Activated CD4-positive, alpha-beta T cell treated with anti-CD3 and anti-CD28 coated beads, Interleukin-2, amount 10 ng/mL, durations not matched to agents 24 days and 14 days (primary cell): ENCODE measurements at regions of chr14 and their contacts with region 1.

Region 1: GRCh38 chr14:20682435-20683124 is 1.8 kb upstream of the RNASE4 start:
- DNase-seq: peak; percentile 92
- H3K4me3 Mint-ChIP-seq: no peak overlapping the region
- H3K27ac Mint-ChIP-seq: no peak overlapping the region
- H3K4me1 Mint-ChIP-seq: peaks cover 27% of the 10 kb centered on the region
- H3K27me3 Mint-ChIP-seq: peaks cover 2% of the 10 kb centered on the region

Region 2: DNA sequence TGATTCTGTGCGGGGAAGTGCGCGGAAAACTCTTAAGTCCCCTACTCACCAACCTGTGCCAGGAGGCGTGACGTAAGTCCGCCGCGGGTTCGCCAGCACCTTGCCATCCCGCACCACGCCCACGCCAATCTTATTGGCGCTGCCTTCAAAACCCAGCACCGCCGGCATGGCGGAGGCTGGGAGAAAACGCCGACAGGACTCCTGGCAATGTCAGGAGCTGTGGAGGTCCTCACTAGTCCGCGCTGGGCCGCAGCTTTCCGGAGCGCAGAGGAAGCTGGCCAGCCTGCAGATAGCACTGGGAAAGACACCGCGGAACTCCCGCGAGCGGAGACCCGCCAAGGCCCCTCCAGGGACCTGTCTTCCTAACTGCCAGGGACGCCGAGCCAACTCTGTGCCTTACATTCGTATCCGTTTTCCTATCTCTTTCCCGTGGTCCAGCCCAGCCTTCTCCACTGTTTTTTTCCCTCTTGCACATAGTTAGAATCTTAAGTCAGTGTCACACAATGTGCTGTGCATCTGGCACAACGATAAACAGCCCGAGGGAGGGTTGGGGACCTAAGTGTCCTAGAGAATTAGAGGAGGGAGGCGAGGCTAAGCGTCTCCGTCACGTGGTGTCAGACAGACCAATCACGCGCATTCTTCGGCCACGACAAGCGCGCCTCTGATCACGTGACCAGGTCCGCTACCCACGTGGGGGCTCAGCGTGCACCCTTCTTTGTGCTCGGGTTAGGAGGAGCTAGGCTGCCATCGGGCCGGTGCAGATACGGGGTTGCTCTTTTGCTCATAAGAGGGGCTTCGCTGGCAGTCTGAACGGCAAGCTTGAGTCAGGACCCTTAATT is 227.8 kb before region 1 on chr14 and contains the starts of genes APEX1 and OSGEP:
- intact Hi-C with region 1: loop called (anchors 1 kb)
- DNase-seq: peak; percentile 99
- H3K4me3 Mint-ChIP-seq: peak within 1 kb of the TSS; percentile 59
- H3K27ac Mint-ChIP-seq: no peak within 1 kb of the TSS
- H3K4me1 Mint-ChIP-seq: peaks cover 20% of the 10 kb centered on the region
- H3K27me3 Mint-ChIP-seq: no peaks in the 10 kb centered on the region
- total RNA-seq, gene APEX1: 239 and 242 TPM in 2 replicates
- total RNA-seq, gene OSGEP: 69.8 and 76.9 TPM in 2 replicates

Region 3: DNA sequence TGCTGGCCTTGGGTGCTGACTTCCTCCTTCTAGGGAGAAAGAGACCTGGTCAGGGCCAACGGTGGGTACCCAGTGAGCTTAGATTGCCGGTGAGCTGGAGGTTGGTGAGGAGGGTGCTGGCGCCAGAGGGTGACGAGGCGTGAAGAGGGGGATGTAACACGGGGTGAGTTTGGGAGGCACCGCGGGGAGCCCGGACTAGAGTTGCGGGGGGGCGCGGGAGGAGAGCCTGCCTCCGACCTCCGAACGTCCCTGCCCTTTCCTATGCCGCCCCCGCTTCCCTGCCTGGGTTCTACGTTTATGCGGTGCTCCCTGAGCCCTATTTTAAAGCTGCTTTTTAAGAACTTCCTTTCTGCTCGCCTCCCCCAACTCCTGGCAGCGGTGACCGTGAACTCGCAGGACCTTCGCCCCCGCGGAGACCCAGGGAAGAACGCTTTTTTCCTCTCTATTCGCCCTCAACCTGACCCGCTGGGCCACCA is 59.7 kb before region 1 on chr14:
- intact Hi-C with region 1: no loop called
- DNase-seq: no peak
- H3K4me3 Mint-ChIP-seq: peak overlapping the region; percentile 62
- H3K27ac Mint-ChIP-seq: no peak overlapping the region
- H3K4me1 Mint-ChIP-seq: peaks cover 49% of the 10 kb centered on the region
- H3K27me3 Mint-ChIP-seq: peaks cover 42% of the 10 kb centered on the region

Region 4: GRCh38 chr14:20632682-20633428 is 49.7 kb before region 1 on chr14:
- intact Hi-C with region 1: loop called (anchors 1 kb)
- DNase-seq: peak; percentile 89
- H3K4me3 Mint-ChIP-seq: peak overlapping the region; percentile 88
- H3K27ac Mint-ChIP-seq: peak overlapping the region; percentile 84
- H3K4me1 Mint-ChIP-seq: peaks cover 38% of the 10 kb centered on the region
- H3K27me3 Mint-ChIP-seq: peaks cover 75% of the 10 kb centered on the region

Region 5: GRCh38 chr14:20652996-20653975 is 29.3 kb before region 1 on chr14:
- intact Hi-C with region 1: no loop called
- DNase-seq: peak; percentile 82
- H3K4me3 Mint-ChIP-seq: peak overlapping the region; percentile 66
- H3K27ac Mint-ChIP-seq: no peak overlapping the region
- H3K4me1 Mint-ChIP-seq: peaks cover 27% of the 10 kb centered on the region
- H3K27me3 Mint-ChIP-seq: peaks cover 66% of the 10 kb centered on the region

Region 6: GRCh38 chr14:20970983-20971704 is 288.6 kb after region 1 on chr14:
- intact Hi-C with region 1: loop called (anchors 5 kb)
- DNase-seq: peak; percentile 95
- H3K4me3 Mint-ChIP-seq: peak overlapping the region; percentile 92
- H3K27ac Mint-ChIP-seq: peak overlapping the region; percentile 70
- H3K4me1 Mint-ChIP-seq: peaks cover 13% of the 10 kb centered on the region
- H3K27me3 Mint-ChIP-seq: peaks cover 50% of the 10 kb centered on the region

Region 7: DNA sequence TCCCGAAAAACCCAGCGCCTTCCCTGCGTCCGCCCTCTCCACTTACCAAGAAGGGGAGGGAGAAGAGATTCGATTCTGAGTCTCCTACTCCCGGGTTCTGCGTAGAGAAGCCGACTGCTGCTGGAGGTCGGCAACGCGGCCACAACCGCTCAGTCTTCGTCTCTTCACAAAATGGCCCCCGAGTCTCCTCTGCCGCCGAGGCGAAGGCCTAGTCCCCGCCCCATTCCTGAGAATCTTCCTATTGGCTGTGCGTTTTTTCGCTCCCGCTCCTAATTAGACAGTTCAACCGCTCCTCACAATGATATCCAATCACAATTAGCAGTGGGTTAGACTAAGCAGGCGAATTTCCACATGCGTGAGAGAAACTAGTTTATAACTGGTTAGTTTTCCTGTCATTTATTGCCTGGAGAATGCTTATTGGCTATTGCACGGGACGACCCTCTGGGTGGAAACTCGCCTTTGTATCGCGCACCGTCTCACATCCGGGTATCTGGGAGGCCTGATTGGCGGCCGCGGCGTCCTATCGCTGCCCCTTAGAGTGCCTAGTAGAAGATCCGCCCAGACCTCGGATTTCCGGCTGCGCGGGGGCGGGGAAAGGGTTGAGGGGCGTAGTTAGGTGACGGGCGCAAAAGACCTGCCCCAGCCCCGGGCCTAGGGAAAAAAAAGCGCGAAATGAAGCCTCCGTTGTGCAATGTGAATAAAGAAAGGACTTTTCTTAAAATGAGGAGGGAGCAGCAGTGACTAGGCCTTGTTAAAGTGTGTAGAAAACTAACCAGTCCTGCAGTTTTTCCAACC is 586.9 kb after region 1 on chr14 and contains the start of gene HNRNPC:
- intact Hi-C with region 1: loop called (anchors 10 kb)
- DNase-seq: peak; percentile 100
- H3K4me3 Mint-ChIP-seq: peak within 1 kb of the TSS; percentile 92
- H3K27ac Mint-ChIP-seq: peak within 1 kb of the TSS; percentile 100
- H3K4me1 Mint-ChIP-seq: peaks cover 30% of the 10 kb centered on the region
- H3K27me3 Mint-ChIP-seq: no peaks in the 10 kb centered on the region
- total RNA-seq, gene HNRNPC: 1,009 and 1,054 TPM in 2 replicates